ENCODE measurements at regions of chr13 and their contacts with region 1.

Region 1: GRCh38 chr13:101942038-101942437 is 459.8 kb downstream of the FGF14 start:
- DNase-seq: peak in 1 of 10 donors; percentile 22

Region 2: GRCh38 chr13:102460801-102461200 is 518.8 kb after region 1 on chr13:
- intact Hi-C with region 1: loop called (anchors 2 kb)
- DNase-seq: no peak

Region 3: GRCh38 chr13:102555917-102556553 is 614.0 kb after region 1 on chr13:
- intact Hi-C with region 1: loop called (anchors 2 kb)
- DNase-seq: no peak

Measured in posterior cingulate gyrus (tissue), 11 donors.